ENCODE measurements at regions of chr19 and their contacts with region 1.

Region 1: DNA sequence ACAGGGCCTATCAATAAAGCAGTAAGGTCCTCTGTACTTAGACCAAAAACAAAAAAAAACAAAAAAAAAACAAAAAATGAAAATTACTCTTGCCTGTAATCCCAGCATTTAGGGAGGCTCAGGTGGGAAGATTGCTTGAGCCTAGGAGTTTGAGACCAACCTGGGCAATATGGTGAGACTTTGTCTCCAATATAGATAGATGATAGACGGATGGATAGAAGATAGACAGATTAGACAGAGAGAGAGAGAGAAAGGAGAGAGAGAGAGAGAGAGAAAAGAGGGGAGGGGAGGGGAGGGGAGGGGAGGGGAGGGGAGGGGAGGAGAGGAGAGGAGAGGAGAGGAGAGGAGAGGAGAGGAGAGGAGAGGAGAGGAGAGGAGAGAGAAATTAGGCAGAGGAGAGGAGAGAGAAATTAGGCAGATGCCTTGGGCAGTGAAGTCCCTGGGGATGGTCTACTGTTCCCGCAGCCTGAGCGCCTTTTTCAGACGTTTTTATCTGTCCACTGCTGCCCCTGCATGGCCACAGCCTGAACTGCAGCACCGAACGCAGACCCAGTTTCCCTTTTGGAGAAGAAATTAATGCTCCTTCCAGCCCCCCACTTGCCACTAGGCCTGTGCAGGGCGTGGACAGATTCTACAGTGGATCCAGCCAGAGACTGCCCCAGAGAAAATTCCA is 9.8 kb upstream of the ZNF627 start:
- DNase-seq: peak; percentile 62 to 81
- ATAC-seq: peak; percentile 93

Region 2: GRCh38 chr19:11482384-11483050 is 104.9 kb before region 1 on chr19:
- intact Hi-C with region 1: no loop called
- DNase-seq: peak; percentile 71 to 87
- ATAC-seq: peak; percentile 85

Region 3: GRCh38 chr19:11496391-11497163 is 90.9 kb before region 1 on chr19:
- intact Hi-C with region 1: loop called in 1 of 2 experiments (anchors 10 kb)
- DNase-seq: peak; percentile 62 to 79
- ATAC-seq: peak; percentile 84

Region 4: DNA sequence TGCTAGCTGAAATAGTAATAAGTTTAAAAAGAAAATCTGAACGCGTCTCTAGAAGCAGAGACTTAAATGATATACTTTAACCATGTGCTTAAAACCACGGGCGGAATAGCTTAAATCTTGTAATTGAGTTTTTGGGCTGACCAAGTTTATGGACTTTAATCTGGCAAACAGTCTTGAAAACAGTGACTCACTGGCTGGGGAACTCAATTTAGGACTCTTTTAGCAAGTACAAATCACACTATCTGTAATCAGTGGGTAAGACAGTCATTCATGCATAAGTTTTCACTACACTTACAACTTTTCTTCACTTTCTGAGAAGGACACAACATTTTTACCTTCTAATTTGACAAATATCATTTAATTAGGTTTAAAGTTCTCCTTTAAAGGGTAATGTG is 36.6 kb after region 1 on chr19:
- intact Hi-C with region 1: no loop called
- DNase-seq: no peak
- ATAC-seq: peak; percentile 29